GM10248 (cell line): ENCODE measurements at regions of chr15 and their contacts with region 1.

Region 1: GRCh38 chr15:35697549-35698299 is 151.8 kb upstream of the DPH6 start:
- DNase-seq: no peak
- CTCF ChIP-seq: no peak

Region 2: DNA sequence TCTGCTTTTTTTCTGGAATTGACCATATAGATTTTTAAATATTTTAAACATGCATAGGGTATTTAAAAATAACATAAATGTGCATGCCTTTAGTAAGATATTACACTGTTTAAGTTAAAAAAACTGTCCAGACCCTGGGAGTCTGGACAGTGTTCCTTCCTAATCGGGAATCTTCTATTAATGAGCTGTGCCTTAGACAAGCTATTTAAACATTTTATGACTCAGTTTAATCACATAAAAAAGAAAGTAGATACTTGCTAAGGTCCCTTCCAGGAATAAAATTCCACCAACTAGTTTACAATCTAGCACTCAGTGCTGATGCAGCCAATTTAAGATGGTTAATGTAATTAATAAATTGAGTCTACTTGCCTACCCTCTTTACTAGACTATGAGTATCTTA is 11.4 kb before region 1 on chr15:
- CTCF ChIA-PET with region 1: interaction called, 11 read pairs
- POLR2A ChIA-PET with region 1: no interaction called
- DNase-seq: no peak
- CTCF ChIP-seq: no peak